CD4-positive, alpha-beta T cell (primary cell): ENCODE measurements at regions of chr1 and their contacts with region 1.

Region 1: GRCh38 chr1:53190210-53190611 is 6.4 kb upstream of the CPT2 start:
- DNase-seq: no peak
- ATAC-seq: no peak
- H3K4me3 ChIP-seq: no peak overlapping the region
- H3K4me3 Mint-ChIP-seq: no peak overlapping the region
- H3K27ac ChIP-seq: no peak overlapping the region
- H3K27ac Mint-ChIP-seq: no peak overlapping the region
- H3K4me1 ChIP-seq: no peaks in the 10 kb centered on the region
- H3K4me1 Mint-ChIP-seq: no peaks in the 10 kb centered on the region
- H3K27me3 ChIP-seq: no peaks in the 10 kb centered on the region
- H3K27me3 Mint-ChIP-seq: no peaks in the 10 kb centered on the region
- CTCF ChIP-seq: no peak

Region 2: GRCh38 chr1:52920791-52921291 is 269.4 kb before region 1 on chr1:
- CTCF ChIA-PET with region 1: no interaction called
- POLR2A ChIA-PET with region 1: no interaction called
- intact Hi-C with region 1: loop called in 1 of 2 experiments (anchors 5 kb)
- DNase-seq: peak in 1 of 14 experiments; percentile 30
- ATAC-seq: no peak
- H3K4me3 ChIP-seq: peak overlapping the region; percentile 66
- H3K4me3 Mint-ChIP-seq: peak overlapping the region; percentile 85
- H3K27ac ChIP-seq: peak overlapping the region; percentile 53 to 79
- H3K27ac Mint-ChIP-seq: peak overlapping the region; percentile 70
- H3K4me1 ChIP-seq: peaks cover 28% of the 10 kb centered on the region
- H3K4me1 Mint-ChIP-seq: peaks cover 39% of the 10 kb centered on the region
- H3K27me3 ChIP-seq: no peaks in the 10 kb centered on the region
- H3K27me3 Mint-ChIP-seq: no peaks in the 10 kb centered on the region
- CTCF ChIP-seq: no peak